GM10248 (cell line): ENCODE measurements at regions of chr5 and their contacts with region 1.

Region 1: DNA sequence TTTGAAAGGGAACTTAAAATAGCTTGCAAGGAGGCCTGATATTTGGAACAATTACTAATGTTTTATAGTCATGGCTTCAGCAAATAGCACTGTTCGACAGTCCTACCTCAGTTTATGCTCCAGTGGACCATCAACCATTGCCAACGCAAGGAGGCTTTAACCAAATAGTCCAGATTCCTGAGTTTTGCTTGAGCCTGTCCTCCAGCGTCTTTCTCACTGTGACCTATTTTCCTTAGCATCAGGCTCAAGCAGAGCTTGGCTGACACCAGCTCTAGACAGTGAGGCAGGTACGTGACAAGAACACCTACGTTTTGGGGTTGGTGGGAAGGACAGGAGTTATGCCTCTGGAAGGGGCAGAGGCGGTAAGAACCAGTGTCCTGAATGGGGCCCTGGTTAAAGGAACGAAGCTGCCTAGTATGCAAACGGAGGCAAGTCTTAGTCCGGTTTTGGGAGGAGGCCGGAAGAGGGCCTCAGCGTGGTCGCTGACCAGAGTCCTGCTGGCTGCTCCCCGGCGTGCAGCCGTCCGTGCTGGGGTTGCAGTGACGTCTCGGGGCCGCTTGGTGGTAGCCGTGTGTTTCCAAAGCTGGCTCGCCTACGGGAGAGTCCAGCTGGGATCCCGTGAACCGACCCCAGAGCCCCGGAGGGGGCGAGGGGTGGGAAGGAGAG is 998 bp upstream of the FGF18 start:
- DNase-seq: peak; percentile 88
- CTCF ChIP-seq: peak; percentile 95

Region 2: GRCh38 chr5:171251519-171251918 is 166.9 kb before region 1 on chr5:
- CTCF ChIA-PET with region 1: no interaction called
- POLR2A ChIA-PET with region 1: no interaction called
- DNase-seq: no peak
- CTCF ChIP-seq: no peak

Region 3: DNA sequence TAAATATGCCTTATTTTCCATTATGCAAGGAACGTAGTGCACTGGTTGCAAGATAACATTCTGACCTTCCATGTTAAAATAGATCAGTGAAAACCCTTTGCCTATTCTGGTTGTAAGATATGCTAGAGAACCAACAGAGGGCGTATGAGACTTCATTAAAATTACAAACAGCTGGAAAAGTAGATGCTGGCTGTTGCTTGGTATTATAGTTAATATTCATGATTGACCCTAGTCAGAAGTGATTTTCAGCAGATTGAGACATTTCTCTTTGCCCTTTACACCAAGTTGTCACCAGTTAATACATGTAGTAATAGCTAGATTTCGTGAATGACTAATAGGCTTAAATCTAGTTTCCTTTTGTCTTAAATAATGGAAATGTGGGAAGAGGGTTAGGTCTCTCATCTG is 12.8 kb before region 1 on chr5:
- CTCF ChIA-PET with region 1: interaction called, 20 read pairs
- POLR2A ChIA-PET with region 1: interaction called, 3 read pairs
- DNase-seq: no peak
- CTCF ChIP-seq: peak; percentile 28

Region 4: DNA sequence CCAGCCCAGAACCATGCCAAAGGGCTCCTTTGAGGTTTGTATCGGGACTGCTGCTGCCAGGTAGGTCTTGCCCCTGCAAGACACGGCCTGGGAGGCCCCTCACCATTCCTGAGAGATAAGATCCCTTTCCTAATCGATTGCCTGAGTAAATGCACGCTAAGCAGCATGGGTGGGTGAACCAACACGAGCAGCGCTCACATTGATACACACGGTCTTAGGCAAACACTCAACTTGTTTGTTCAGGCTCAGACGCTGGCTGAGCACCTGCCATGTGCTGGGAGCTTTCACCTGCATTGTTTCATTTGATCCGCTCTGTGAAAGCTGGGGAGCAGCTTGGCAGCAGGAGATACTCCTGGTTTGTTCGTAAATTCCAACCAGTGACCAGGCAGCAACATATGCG is 1145.7 kb after region 1 on chr5:
- CTCF ChIA-PET with region 1: no interaction called
- POLR2A ChIA-PET with region 1: no interaction called
- DNase-seq: no peak
- CTCF ChIP-seq: no peak